Ovary (tissue), 10 donors: ENCODE measurements at regions of chr20 and their contacts with region 1.

Region 1: DNA sequence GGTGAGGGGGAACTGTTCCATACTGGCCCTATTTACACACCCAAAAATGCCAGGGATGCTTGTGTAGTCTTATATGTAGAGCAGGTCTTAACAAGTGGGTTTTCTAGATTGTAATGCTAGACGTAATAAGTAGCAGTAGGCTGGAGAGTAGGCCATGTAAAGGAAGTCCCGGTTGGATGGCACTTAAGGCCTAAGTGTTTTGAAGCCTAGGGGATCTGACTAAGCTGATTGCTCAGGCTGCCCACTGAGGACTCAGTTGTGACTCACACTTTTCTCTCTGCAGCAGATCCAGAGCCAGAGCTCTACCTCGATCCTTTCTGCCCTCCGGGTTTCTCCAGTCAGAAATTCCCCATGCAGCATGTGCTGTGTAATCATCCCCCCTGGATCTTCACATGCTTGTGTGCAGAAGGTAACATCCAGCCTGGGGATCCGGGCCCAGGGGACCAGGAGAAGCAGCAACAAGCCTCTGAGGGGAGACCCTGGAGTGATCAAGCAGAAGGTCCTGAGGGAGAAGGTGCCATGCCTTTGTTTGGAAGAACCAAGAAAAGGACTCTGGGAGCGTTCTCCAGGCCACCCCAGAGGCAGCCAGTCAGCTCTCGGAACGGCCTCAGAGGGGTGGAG is 26.6 kb downstream of the ZNF133 start:
- DNase-seq: no peak
- H3K4me3 ChIP-seq: no peak overlapping the region
- H3K27ac ChIP-seq: no peak overlapping the region
- H3K4me1 ChIP-seq: no peaks in the 10 kb centered on the region
- H3K27me3 ChIP-seq: no peaks in the 10 kb centered on the region
- CTCF ChIP-seq: no peak
- EP300 ChIP-seq: no peak
- POLR2A ChIP-seq: no peak

Region 2: GRCh38 chr20:18331694-18332093 is 16.8 kb after region 1 on chr20:
- intact Hi-C with region 1: loop called in 1 of 4 experiments (anchors 1 kb)
- DNase-seq: no peak
- H3K4me3 ChIP-seq: no peak overlapping the region
- H3K27ac ChIP-seq: no peak overlapping the region
- H3K4me1 ChIP-seq: no peaks in the 10 kb centered on the region
- H3K27me3 ChIP-seq: no peaks in the 10 kb centered on the region
- CTCF ChIP-seq: no peak
- EP300 ChIP-seq: no peak
- POLR2A ChIP-seq: no peak